ENCODE measurements at regions of chr18 and their contacts with region 1.

Region 1: DNA sequence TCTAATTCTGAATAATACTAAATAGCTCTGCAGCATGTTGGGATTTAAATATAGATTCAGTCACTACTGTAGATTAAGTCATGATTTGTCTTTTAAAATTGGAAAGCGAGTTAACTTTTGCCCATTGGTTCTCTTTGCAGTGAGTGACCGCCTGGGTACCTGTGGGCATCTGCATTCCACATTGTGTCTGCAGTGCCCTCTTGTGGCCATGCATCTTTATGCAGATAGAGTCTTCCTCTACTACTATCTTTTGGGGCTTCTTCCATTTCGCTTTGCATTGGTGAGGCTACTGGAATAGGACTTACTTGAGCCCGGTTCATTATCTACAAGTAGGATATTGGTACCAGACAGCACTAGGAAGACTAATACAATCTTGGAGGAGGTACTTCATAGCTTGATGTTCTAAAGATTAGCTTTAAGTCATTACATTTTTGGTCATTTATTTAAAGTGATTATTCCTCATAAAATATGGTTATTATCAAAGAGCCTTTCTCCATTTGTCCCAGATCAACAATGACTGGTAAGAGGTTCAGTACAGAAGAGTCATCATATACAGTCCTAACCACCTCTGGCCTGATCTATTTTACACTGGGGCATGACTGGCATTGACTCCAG is 203.0 kb downstream of the SOCS6 start:
- DNase-seq: peak; percentile 55
- H3K4me3 ChIP-seq: no peak overlapping the region; a peak in 1 of 4 replicates
- H3K27ac ChIP-seq: no peak overlapping the region
- H3K4me1 ChIP-seq: peaks cover 6 to 14% of the 10 kb centered on the region in 2 experiments; a peak in 3 of 4 replicates
- H3K27me3 ChIP-seq: no peaks in the 10 kb centered on the region
- CTCF ChIP-seq: peak; percentile 89
- EP300 ChIP-seq: no peak
- RAD21 ChIP-seq: peak; percentile 72

Region 2: GRCh38 chr18:70469916-70470315 is 21.9 kb before region 1 on chr18:
- CTCF ChIA-PET with region 1: interaction called, 82 read pairs
- POLR2A ChIA-PET with region 1: no interaction called
- DNase-seq: peak; percentile 65
- H3K4me3 ChIP-seq: peak overlapping the region in 1 of 2 experiments; percentile 33; a peak in 2 of 4 replicates
- H3K27ac ChIP-seq: peak overlapping the region; percentile 39 to 100; a peak in 3 of 4 replicates
- H3K4me1 ChIP-seq: peaks cover 9 to 27% of the 10 kb centered on the region in 2 experiments; a peak in 3 of 4 replicates
- H3K27me3 ChIP-seq: no peaks in the 10 kb centered on the region
- CTCF ChIP-seq: no peak
- EP300 ChIP-seq: peak; percentile 55 to 98; a peak in 3 of 4 replicates
- RAD21 ChIP-seq: peak; percentile 8; the same call in 1 of the 2 replicates

Region 3: DNA sequence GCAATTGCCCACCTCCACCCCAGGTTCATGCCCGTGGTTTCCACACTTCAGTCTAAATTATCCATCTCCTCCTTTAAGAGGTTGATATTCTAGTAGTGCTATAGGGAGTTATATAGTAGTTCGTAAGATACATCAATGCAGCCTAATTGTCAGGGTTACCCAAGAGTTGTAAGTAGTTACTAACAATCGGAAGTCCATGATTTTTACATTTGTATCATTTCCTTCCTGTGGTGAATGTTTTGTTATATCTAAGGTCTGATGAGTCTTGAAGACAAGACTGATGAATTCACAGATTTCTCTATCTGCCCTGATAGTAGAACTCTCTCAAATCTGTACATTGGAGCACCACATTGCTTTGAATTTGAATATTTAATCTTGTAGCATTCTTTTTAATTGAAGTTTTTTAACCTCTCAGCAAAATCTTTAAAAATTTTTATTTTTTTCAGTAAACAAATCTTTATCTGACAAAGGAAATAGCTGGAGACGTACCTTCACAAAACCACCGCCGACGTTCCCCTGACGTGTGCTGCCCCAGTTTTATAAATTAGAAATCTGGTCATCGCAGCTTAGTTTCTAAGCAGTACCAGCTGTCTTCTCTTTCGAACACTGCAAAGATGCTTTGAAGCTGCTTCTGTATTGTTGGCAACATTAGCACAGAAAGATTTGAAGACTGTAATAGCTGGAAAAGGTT is 61.5 kb after region 1 on chr18:
- CTCF ChIA-PET with region 1: interaction called, 11 read pairs
- POLR2A ChIA-PET with region 1: no interaction called
- DNase-seq: peak; percentile 36
- H3K4me3 ChIP-seq: peak overlapping the region in 1 of 2 experiments; percentile 12; a peak in 1 of 4 replicates
- H3K27ac ChIP-seq: peak overlapping the region in 1 of 2 experiments; percentile 85; a peak in 2 of 4 replicates
- H3K4me1 ChIP-seq: no peaks in the 10 kb centered on the region; a peak in 3 of 4 replicates
- H3K27me3 ChIP-seq: no peaks in the 10 kb centered on the region
- CTCF ChIP-seq: no peak
- EP300 ChIP-seq: peak in 1 of 2 experiments; percentile 48; a peak in 1 of 4 replicates
- RAD21 ChIP-seq: no peak; the same call in 1 of the 2 replicates

Region 4: DNA sequence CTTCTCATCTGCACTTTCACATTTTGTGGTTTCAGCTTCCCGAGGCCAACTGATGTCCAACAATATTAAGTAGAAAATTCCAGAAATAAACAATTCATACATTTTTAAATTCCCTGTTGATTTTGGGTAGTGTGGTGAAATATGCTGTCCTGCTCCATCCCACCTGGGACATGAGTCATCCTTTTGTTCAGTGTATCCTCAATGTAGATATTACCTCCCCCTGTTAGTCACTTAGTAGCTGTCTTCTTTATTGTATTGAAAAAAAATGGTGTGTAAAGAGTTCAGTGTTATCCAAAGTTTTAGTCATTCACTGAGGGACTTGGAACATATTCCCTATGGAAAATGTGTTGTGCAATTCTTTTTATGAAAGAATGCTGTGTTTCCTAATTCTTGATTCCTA is 145.2 kb after region 1 on chr18:
- CTCF ChIA-PET with region 1: no interaction called
- POLR2A ChIA-PET with region 1: no interaction called
- DNase-seq: no peak
- H3K4me3 ChIP-seq: no peak overlapping the region
- H3K27ac ChIP-seq: no peak overlapping the region
- H3K4me1 ChIP-seq: peaks cover 0 to 9% of the 10 kb centered on the region in 2 experiments; a peak in 2 of 4 replicates
- H3K27me3 ChIP-seq: no peaks in the 10 kb centered on the region
- CTCF ChIP-seq: no peak
- EP300 ChIP-seq: no peak
- RAD21 ChIP-seq: no peak

Measured in SK-N-SH (cell line).